Activated CD4-positive, alpha-beta memory T cell treated with anti-CD3 and anti-CD28 coated beads, Interleukin-2, amount 10 ng/mL, durations not matched to agents 7 days and 5 days (primary cell): ENCODE measurements at regions of chr12 and their contacts with region 1.

Region 1: DNA sequence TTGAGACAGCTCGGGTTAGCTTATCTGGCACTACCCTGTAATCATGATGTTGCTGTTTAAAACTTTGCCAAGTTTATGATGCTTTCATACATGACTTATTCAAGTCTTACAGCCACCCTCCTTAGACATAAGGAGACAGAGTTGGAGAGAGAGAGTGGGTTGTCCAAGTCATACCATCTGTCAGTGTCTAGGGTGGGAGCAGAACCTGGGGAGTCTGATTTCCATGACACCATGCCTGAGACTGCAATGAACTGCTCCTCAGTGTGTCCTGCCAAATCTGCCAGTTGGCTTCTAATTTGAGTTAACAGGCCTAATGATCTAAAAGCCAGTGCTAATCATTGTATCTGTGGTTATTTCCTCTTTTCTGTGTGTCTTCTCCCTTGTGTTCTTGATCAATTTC is 43.7 kb upstream of the PHC1 start:
- DNase-seq: no peak
- H3K4me3 Mint-ChIP-seq: no peak overlapping the region
- H3K27ac Mint-ChIP-seq: no peak overlapping the region
- H3K4me1 Mint-ChIP-seq: peaks cover 3% of the 10 kb centered on the region
- H3K27me3 Mint-ChIP-seq: peaks cover 4% of the 10 kb centered on the region

Region 2: GRCh38 chr12:8796831-8797626 is 73.6 kb before region 1 on chr12:
- CTCF ChIA-PET with region 1: no interaction called
- POLR2A ChIA-PET with region 1: no interaction called
- DNase-seq: no peak
- H3K4me3 Mint-ChIP-seq: no peak overlapping the region
- H3K27ac Mint-ChIP-seq: no peak overlapping the region
- H3K4me1 Mint-ChIP-seq: no peaks in the 10 kb centered on the region
- H3K27me3 Mint-ChIP-seq: no peaks in the 10 kb centered on the region

Region 3: GRCh38 chr12:8860165-8860961 is 10.2 kb before region 1 on chr12:
- CTCF ChIA-PET with region 1: interaction called, 12 read pairs
- POLR2A ChIA-PET with region 1: no interaction called
- DNase-seq: peak; percentile 24
- H3K4me3 Mint-ChIP-seq: no peak overlapping the region
- H3K27ac Mint-ChIP-seq: no peak overlapping the region
- H3K4me1 Mint-ChIP-seq: no peaks in the 10 kb centered on the region
- H3K27me3 Mint-ChIP-seq: peaks cover 4% of the 10 kb centered on the region

Region 4: DNA sequence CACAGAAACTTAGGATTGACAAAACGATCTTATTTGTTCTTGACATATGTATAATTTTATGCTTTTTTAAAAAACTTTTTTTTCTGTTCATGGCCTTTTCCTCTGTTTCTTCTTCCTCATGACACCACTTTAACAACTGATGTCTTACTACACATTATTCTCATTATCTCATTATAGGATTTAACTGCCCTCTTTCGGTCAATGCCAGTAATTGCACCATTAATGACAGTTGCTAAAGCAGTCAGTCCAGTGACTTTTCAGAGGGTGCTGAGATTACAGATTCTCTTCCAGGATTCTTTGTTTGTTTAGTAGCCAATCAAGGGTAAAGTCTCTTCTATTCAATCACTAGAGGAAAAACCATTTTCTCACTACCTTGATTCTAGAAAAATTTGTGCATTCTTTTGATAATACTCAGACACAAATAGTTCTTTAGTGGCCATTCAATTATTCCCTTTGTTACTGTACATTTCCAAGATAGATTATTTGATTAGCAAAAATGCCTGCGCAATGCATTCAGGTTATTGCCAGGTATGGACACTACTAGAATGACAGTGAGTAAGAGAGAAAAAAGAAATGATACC is 168.9 kb after region 1 on chr12:
- CTCF ChIA-PET with region 1: no interaction called
- POLR2A ChIA-PET with region 1: no interaction called
- DNase-seq: no peak
- H3K4me3 Mint-ChIP-seq: no peak overlapping the region
- H3K27ac Mint-ChIP-seq: no peak overlapping the region
- H3K4me1 Mint-ChIP-seq: peaks cover 26% of the 10 kb centered on the region
- H3K27me3 Mint-ChIP-seq: no peaks in the 10 kb centered on the region

Region 5: DNA sequence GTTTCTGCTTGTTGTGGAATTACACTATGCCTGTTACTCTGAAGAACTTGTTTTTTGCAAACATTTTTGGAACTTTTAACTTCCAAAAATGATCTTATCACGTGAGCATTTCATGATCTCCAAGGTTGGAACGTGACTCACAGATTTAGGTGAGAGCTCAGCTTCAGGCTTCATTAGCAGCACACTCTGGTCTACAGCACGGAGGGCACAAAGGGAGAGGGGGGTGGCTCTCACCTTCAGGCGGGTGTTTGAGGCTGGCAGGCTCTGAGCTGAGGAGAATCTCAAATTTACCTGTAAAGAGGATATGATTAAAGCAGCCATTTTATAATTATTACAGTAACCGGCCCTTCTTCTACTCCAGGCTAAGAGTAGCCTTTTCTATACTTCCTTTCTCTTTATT is 382.9 kb after region 1 on chr12:
- CTCF ChIA-PET with region 1: no interaction called
- POLR2A ChIA-PET with region 1: no interaction called
- DNase-seq: no peak
- H3K4me3 Mint-ChIP-seq: no peak overlapping the region
- H3K27ac Mint-ChIP-seq: no peak overlapping the region
- H3K4me1 Mint-ChIP-seq: peaks cover 3% of the 10 kb centered on the region
- H3K27me3 Mint-ChIP-seq: peaks cover 4% of the 10 kb centered on the region